CD4-positive, alpha-beta memory T cell (primary cell): ENCODE measurements at regions of chr22 and their contacts with region 1.

Region 1: DNA sequence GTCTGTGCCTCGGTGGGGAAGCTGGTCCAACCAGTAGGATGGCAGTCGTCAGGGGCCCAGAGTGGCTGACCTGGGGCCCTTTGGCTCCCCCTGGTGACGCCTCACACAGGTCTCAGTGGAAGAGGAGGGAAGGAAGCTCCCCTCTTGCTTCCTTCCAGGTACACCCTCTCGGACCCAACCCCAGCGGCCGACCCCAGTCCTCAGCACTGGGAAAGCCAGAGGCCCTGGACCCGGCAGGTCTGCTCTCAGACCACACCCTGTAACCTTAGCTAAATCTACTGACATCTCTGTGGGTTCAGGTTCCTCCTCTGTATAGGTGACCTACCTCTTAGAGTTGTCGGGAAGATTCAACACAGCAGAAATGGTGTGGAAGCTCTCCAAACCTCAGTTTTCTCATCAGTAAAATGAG is 3.4 kb upstream of the SCUBE1 start:
- DNase-seq: peak; percentile 47 to 61 (median 48)
- H3K4me3 ChIP-seq: no peak overlapping the region
- H3K4me3 Mint-ChIP-seq: no peak overlapping the region
- H3K27ac ChIP-seq: no peak overlapping the region
- H3K27ac Mint-ChIP-seq: no peak overlapping the region
- H3K4me1 ChIP-seq: no peaks in the 10 kb centered on the region
- H3K4me1 Mint-ChIP-seq: peaks cover 7 to 20% (median 11%) of the 10 kb centered on the region in 4 donors
- H3K27me3 ChIP-seq: no peaks in the 10 kb centered on the region
- H3K27me3 Mint-ChIP-seq: peaks cover 25 to 47% of the 10 kb centered on the region in 2 donors

Region 2: DNA sequence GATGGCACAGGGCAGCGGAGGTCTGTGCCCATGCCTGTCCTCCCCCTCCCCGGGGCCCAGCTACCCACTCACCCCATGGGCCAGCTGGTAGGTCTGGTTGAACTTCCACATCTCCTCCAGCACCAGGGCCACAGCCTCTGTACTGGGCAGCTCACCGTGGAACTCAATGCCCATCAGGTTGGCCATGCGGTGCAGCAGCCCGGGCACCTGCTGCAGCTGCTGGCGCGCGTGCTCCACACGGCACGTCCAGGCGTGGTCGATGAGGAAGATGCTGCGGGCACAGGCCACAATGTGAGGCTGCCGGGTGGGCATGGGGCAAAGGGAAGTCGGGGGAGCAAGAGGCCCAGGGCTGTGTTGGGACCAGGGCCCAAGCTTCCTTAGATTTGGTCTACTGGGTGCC is 165.9 kb before region 1 on chr22:
- CTCF ChIA-PET with region 1: no interaction called
- POLR2A ChIA-PET with region 1: no interaction called
- intact Hi-C with region 1: no loop called
- DNase-seq: no peak
- H3K4me3 ChIP-seq: no peak overlapping the region
- H3K4me3 Mint-ChIP-seq: no peak overlapping the region
- H3K27ac ChIP-seq: no peak overlapping the region
- H3K27ac Mint-ChIP-seq: no peak overlapping the region
- H3K4me1 ChIP-seq: peaks cover 9% of the 10 kb centered on the region
- H3K4me1 Mint-ChIP-seq: peaks cover 3 to 21% (median 8%) of the 10 kb centered on the region in 4 donors
- H3K27me3 ChIP-seq: no peaks in the 10 kb centered on the region
- H3K27me3 Mint-ChIP-seq: no peaks in the 10 kb centered on the region

Region 3: DNA sequence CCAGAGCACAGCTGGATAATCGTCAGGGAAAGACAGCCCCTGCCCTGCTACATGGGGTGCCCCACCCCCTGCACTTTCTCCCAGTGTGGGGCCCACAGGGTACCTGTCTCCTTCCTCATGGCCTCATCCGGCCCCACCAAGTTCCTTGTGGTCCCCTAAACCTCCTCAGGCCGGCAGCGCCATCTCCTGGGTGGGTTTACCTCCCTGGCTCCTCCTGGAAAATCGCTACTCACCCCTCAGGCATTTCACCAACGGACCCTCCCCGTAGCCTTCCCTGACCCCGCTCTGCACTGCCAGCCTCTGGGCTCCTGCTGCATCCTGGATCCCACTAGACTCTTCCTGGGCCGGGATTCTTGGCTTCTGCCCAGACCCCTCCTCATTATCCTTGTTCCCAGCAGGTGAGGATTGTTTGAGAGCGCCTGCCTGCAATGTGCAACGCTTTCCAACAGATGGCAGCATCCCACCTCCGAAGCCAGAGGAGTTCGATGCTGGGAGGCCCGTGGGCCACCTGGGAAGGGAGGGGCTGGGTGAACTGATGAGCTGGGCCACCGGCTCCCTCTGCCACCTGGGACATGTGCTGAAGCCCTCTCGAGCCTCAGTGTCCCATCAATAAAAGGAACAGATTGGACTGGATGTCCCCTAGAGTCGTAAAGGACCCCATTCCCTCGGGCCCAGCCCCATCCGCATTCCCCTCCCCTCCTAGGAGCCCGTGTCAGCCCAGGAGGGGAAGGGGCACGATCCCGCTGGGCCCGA is 115.4 kb before region 1 on chr22:
- CTCF ChIA-PET with region 1: interaction called, 140 read pairs
- POLR2A ChIA-PET with region 1: no interaction called
- intact Hi-C with region 1: no loop called
- DNase-seq: peak; percentile 50 to 59 (median 55)
- H3K4me3 ChIP-seq: no peak overlapping the region
- H3K4me3 Mint-ChIP-seq: no peak overlapping the region
- H3K27ac ChIP-seq: no peak overlapping the region
- H3K27ac Mint-ChIP-seq: peak overlapping the region in 1 of 7 donors; percentile 47
- H3K4me1 ChIP-seq: no peaks in the 10 kb centered on the region
- H3K4me1 Mint-ChIP-seq: peaks cover 2 to 5% (median 4%) of the 10 kb centered on the region in 4 donors
- H3K27me3 ChIP-seq: no peaks in the 10 kb centered on the region
- H3K27me3 Mint-ChIP-seq: peaks cover 3 to 6% of the 10 kb centered on the region in 2 donors

Region 4: DNA sequence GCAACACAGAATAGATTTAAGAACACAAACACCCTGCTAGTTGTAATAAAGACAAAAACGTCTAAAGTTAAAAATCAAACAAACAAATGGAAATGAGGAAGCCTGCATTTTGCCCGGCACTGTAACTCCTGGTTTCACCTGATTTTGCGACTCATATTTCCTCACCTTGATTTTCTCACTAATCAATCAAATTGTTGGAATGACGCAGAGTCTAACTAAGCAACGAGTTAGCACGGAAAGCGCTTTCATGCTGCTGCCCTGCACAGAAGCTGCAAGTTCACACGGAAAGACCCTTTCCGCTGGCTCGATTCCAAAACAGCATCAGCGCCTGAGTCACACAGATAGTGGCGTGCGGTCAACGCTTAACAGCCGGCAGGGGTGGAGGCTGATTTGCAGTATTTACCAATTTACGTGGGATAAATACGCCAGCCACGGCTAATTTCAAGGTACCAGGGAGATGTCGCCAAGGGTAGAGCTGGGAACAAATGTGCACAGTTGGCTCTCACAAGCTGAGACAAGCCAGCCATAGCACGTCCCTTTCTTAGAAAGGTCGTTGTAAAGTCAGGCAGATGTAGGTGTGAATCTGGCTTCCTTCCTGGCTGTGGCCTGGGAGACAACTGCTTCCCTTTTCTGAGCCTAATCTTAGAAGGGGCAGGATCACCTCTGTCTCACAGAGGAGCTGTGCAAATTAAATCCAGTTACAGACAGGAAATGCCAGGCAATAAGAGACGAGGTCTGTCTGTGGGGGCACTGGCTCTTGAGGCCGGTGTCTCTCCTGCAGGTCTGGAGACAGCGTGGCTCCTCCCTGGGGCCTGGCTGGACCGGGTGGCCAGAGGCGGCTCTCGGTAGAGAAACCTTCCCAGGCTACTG is 82.6 kb before region 1 on chr22:
- CTCF ChIA-PET with region 1: interaction called, 13 read pairs
- POLR2A ChIA-PET with region 1: no interaction called
- intact Hi-C with region 1: no loop called
- DNase-seq: peak; percentile 73 to 96 (median 77)
- H3K4me3 ChIP-seq: peak overlapping the region; percentile 5 to 50
- H3K4me3 Mint-ChIP-seq: peak overlapping the region; percentile 72 to 90 (median 85)
- H3K27ac ChIP-seq: peak overlapping the region; percentile 65
- H3K27ac Mint-ChIP-seq: peak overlapping the region; percentile 90 to 97 (median 94)
- H3K4me1 ChIP-seq: peaks cover 27% of the 10 kb centered on the region
- H3K4me1 Mint-ChIP-seq: peaks cover 20 to 38% (median 28%) of the 10 kb centered on the region in 4 donors
- H3K27me3 ChIP-seq: no peaks in the 10 kb centered on the region
- H3K27me3 Mint-ChIP-seq: no peaks in the 10 kb centered on the region

Region 5: DNA sequence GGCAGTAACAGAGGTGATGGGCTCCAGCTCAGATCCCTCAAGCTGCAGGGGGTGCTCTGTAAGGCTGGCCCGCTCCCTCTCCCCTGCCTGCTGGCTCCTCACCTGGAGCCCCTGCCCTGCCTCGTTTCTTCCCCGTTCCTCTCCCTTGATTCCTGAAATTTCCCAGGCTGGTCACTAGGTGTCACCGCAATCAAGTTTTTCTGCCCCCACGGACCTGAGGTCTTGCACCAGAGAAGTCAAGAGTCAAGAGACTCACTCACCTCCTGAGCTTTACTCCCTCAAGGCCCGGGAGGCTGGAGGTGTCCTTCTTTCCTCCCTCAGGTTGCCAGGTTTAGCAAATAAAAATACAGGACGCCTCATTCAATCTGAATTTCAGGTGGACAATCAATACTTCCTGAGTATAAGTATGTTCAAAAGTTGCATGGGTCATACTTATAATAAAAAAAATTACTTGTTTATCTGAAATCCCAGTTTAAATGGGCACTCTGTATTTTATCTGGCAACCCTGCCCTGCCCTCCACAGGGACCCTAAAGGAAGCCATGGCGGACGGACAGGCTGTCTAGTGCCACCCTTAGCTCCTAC is 72.5 kb before region 1 on chr22:
- CTCF ChIA-PET with region 1: interaction called, 80 read pairs
- POLR2A ChIA-PET with region 1: no interaction called
- intact Hi-C with region 1: no loop called
- DNase-seq: peak in 4 of 5 donors; percentile 29 to 47 (median 43)
- H3K4me3 ChIP-seq: no peak overlapping the region
- H3K4me3 Mint-ChIP-seq: no peak overlapping the region
- H3K27ac ChIP-seq: no peak overlapping the region
- H3K27ac Mint-ChIP-seq: no peak overlapping the region
- H3K4me1 ChIP-seq: peaks cover 4% of the 10 kb centered on the region
- H3K4me1 Mint-ChIP-seq: peaks cover 0 to 5% (median 4%) of the 10 kb centered on the region in 4 donors
- H3K27me3 ChIP-seq: no peaks in the 10 kb centered on the region
- H3K27me3 Mint-ChIP-seq: peaks cover 1 to 9% of the 10 kb centered on the region in 2 donors

Region 6: DNA sequence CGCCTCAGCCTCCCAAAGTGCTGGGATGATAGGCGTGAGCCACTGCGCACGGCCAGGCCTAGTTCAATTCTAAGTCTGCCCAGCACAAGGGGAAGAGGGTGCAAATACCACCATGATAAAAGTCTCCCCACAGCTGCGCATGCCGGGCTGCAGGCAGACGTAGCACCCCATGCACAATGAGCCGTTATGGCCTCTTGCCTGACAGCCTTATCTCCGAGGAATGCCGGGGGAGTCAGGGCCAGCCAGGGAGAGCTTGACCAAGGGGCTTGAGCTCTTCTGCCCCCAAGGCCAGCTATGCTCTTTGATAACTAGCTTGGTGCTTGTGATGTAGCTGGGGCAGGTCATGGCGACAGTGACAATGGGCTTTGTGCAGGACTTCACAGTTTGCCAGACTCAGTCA is 10.4 kb after region 1 on chr22:
- CTCF ChIA-PET with region 1: interaction called, 21 read pairs
- POLR2A ChIA-PET with region 1: interaction called, 3 read pairs
- intact Hi-C with region 1: no loop called
- DNase-seq: no peak
- H3K4me3 ChIP-seq: no peak overlapping the region
- H3K4me3 Mint-ChIP-seq: no peak overlapping the region
- H3K27ac ChIP-seq: no peak overlapping the region
- H3K27ac Mint-ChIP-seq: no peak overlapping the region
- H3K4me1 ChIP-seq: no peaks in the 10 kb centered on the region
- H3K4me1 Mint-ChIP-seq: no peaks in the 10 kb centered on the region
- H3K27me3 ChIP-seq: no peaks in the 10 kb centered on the region
- H3K27me3 Mint-ChIP-seq: peaks cover 0 to 13% of the 10 kb centered on the region in 2 donors

Region 7: DNA sequence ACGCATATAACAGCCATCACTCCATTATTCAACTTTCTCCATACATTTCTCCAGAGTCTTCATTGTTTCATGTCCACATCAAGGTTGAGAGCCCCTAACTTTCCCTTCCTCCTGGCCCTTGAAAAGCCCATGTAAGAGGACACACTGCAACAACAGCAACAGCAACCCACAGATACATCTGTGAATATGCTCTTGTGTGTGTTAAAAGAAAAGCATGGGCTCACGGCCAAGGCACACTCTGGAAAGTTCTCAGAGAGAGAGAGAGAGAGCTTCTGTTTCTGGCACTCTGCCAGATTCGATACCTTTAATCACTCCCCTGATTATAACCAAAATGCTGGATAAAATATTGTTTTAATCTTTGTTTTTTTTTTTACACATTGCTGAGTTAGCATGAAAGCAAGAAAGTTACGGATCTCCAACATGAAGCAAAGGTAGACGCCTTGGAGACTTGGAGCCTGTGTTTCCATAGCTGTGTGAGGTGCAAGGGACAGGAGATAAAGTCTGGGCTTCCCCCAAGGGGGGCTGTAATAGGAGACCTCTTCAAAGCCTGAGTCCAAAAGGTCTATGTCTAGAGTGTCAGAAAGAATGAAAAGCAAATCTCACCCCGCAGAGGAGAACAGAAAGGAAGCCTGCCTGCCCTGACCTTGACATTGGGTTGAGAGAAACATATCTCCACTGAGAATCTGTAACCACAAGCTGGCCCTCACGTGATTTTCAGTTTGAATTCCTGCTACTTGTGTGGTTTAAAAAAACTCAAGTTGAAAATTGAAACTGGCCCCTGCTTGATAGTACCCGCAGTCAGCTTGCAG is 31.6 kb after region 1 on chr22:
- CTCF ChIA-PET with region 1: interaction called, 16 read pairs
- POLR2A ChIA-PET with region 1: no interaction called
- intact Hi-C with region 1: no loop called
- DNase-seq: no peak
- H3K4me3 ChIP-seq: no peak overlapping the region
- H3K4me3 Mint-ChIP-seq: peak overlapping the region in 3 of 8 donors; percentile 26 to 48 (median 45)
- H3K27ac ChIP-seq: no peak overlapping the region
- H3K27ac Mint-ChIP-seq: peak overlapping the region in 4 of 7 donors; percentile 4 to 47 (median 17)
- H3K4me1 ChIP-seq: peaks cover 27% of the 10 kb centered on the region
- H3K4me1 Mint-ChIP-seq: peaks cover 12 to 36% (median 27%) of the 10 kb centered on the region in 4 donors
- H3K27me3 ChIP-seq: peaks cover 9% of the 10 kb centered on the region
- H3K27me3 Mint-ChIP-seq: peaks cover 16 to 27% of the 10 kb centered on the region in 2 donors

Region 8: GRCh38 chr22:43385770-43386641 is 39.5 kb after region 1 on chr22:
- CTCF ChIA-PET with region 1: interaction called, 16 read pairs
- POLR2A ChIA-PET with region 1: no interaction called
- intact Hi-C with region 1: no loop called
- DNase-seq: peak; percentile 53 to 72 (median 66)
- H3K4me3 ChIP-seq: no peak overlapping the region
- H3K4me3 Mint-ChIP-seq: peak overlapping the region in 4 of 8 donors; percentile 16 to 57 (median 34)
- H3K27ac ChIP-seq: no peak overlapping the region
- H3K27ac Mint-ChIP-seq: no peak overlapping the region
- H3K4me1 ChIP-seq: peaks cover 9% of the 10 kb centered on the region
- H3K4me1 Mint-ChIP-seq: peaks cover 6 to 16% (median 11%) of the 10 kb centered on the region in 4 donors
- H3K27me3 ChIP-seq: no peaks in the 10 kb centered on the region
- H3K27me3 Mint-ChIP-seq: peaks cover 4 to 9% of the 10 kb centered on the region in 2 donors